Caco-2 (cell line): ENCODE measurements at regions of chr15 and their contacts with region 1.

Region 1: DNA sequence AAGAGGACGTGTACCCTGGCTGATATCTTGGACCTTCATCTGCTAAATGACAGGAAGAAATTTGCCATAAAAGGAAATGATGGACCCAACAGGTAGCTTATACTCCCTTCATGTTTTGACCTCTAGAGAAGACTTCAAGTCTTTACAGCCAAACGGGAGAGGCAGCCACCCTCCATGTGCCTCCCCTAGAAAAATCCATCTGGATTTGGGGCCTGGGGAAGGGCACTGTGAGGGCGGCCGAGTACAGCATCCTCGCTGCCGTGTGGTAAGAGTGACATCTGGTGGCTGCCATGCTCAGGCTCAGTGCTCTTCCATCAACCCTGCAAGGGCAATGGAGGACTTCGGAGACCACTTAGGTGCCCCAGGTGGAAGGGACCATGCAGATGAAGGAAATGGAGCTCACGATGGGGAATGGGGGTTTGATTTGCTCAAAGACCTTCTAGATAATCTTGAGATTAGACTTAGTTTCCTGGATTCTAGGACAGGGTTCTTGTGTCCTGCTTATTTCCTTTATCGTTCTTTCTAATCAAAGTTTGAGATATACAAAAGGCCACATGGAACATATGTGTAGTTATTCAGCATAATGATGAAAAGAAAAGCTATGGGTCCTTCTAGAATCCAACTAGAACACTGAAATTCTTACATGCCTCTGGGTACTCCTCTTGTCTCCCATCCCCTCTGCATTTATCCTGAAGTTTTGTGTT is 44.4 kb downstream of the AQP9 start:
- DNase-seq: peak; percentile 51 to 54
- H3K4me3 ChIP-seq: no peak overlapping the region
- H3K4me3 Mint-ChIP-seq: no peak overlapping the region
- H3K27ac Mint-ChIP-seq: no peak overlapping the region
- H3K4me1 ChIP-seq: no peaks in the 10 kb centered on the region
- H3K4me1 Mint-ChIP-seq: no peaks in the 10 kb centered on the region
- H3K27me3 ChIP-seq: no peaks in the 10 kb centered on the region
- H3K27me3 Mint-ChIP-seq: peaks cover 22% of the 10 kb centered on the region
- CTCF ChIP-seq: peak; percentile 88 to 90

Region 2: DNA sequence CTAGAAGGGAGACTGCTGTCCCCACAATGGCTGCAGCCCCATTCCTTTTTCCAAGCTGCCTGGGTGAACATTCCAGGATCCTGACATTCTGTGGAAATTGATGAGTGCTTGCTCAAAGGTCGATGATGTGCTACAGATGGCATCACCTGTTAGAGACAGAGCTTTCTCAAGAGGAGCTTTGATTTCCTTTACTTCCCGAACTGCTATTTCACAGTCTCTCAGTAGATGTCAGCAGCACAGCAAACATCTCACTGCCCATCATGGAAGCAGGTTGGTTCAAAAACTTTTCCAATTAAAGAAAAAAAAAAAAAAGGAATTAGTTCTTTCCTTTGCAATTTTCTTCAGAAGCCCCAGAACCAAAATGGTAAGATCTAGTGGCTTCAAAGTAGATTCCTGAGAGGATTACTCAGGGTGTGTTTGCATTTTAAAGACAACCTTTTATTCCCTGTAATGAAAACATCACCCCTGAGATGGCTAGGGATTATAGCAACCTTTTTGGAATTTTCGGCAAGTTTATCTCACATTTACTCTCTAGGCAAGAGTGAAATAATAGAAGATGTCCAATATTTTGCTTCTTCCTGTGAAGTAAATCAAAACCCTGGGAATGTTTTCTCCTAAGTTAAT is 431.3 kb before region 1 on chr15:
- CTCF ChIA-PET with region 1: no interaction called
- POLR2A ChIA-PET with region 1: no interaction called
- intact Hi-C with region 1: loop called (anchors 10 kb)
- DNase-seq: peak in 1 of 2 experiments; percentile 29
- H3K4me3 ChIP-seq: no peak overlapping the region
- H3K4me3 Mint-ChIP-seq: no peak overlapping the region
- H3K27ac Mint-ChIP-seq: no peak overlapping the region
- H3K4me1 ChIP-seq: no peaks in the 10 kb centered on the region
- H3K4me1 Mint-ChIP-seq: no peaks in the 10 kb centered on the region
- H3K27me3 ChIP-seq: no peaks in the 10 kb centered on the region
- H3K27me3 Mint-ChIP-seq: no peaks in the 10 kb centered on the region
- CTCF ChIP-seq: peak; percentile 51 to 62

Region 3: DNA sequence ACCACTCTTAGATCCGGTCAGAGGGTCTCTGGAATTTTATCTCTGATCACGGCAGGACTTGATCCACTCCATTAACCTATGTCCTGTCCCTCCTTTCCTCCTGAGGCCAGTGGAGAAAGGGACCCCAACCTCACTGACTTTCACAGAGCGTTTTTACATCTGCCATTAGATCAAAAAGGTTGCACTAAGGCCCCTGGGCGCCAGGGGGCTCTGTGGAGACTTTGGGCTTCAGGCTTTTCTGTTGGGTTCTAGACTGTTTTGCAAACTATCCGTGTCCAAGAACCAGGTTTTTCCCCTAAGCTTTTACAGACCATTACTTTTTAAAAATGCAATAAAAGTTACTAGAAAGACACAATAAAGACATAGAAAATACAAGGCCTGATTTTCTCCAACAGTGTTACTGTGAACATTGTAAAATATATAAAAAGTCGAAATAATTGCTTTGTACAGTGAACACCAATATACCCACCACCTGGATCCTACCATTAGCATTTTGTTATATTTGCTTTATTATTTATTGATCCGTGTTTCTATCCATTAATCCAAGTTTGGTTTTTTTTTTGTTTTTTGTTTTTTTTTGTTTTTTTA is 316.4 kb before region 1 on chr15:
- CTCF ChIA-PET with region 1: no interaction called
- POLR2A ChIA-PET with region 1: no interaction called
- intact Hi-C with region 1: loop called (anchors 1 kb)
- DNase-seq: peak; percentile 47 to 70
- H3K4me3 ChIP-seq: no peak overlapping the region
- H3K4me3 Mint-ChIP-seq: no peak overlapping the region
- H3K27ac Mint-ChIP-seq: no peak overlapping the region
- H3K4me1 ChIP-seq: no peaks in the 10 kb centered on the region
- H3K4me1 Mint-ChIP-seq: no peaks in the 10 kb centered on the region
- H3K27me3 ChIP-seq: no peaks in the 10 kb centered on the region
- H3K27me3 Mint-ChIP-seq: peaks cover 15% of the 10 kb centered on the region
- CTCF ChIP-seq: peak; percentile 62 to 86

Region 4: GRCh38 chr15:57969354-57969753 is 213.3 kb before region 1 on chr15:
- CTCF ChIA-PET with region 1: no interaction called
- POLR2A ChIA-PET with region 1: no interaction called
- intact Hi-C with region 1: loop called (anchors 5 kb)
- DNase-seq: peak in 1 of 2 experiments; percentile 30
- H3K4me3 ChIP-seq: no peak overlapping the region
- H3K4me3 Mint-ChIP-seq: no peak overlapping the region
- H3K27ac Mint-ChIP-seq: no peak overlapping the region
- H3K4me1 ChIP-seq: no peaks in the 10 kb centered on the region
- H3K4me1 Mint-ChIP-seq: no peaks in the 10 kb centered on the region
- H3K27me3 ChIP-seq: peaks cover 2% of the 10 kb centered on the region; the same call in 1 of the 2 replicates
- H3K27me3 Mint-ChIP-seq: peaks cover 11% of the 10 kb centered on the region
- CTCF ChIP-seq: peak; percentile 19 to 38

Region 5: DNA sequence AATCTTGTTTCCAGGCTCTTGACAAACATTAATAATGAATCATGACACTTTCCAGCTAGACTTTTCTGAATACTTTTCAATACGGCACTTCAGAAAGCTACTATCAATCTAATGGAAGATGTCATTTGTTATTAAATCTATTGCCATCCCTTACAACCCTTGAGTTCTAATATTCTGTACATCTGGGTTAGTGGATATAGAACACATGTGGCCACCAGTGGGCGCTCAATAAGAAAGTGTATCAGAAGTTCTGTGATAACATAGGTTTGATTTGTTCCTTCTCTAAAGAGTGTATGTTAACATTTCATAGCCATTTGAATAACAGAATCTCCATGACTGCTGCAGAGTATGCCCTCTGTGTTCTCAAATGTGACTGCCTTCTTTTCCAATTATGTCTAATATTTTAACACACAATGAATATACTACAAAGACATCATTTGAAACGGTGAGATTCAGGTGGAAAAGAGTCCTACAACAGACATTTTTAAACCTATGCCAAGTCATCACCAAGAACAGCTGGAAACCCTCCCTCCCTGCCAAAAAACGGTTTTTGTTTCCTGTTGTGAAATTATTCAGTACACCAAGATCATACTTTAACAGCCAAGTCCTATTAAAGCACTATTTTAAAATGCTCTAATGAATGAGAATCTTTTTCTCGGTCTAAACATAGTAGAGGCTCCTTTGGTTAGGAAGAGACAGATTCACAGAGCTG is 139.3 kb before region 1 on chr15:
- CTCF ChIA-PET with region 1: no interaction called
- POLR2A ChIA-PET with region 1: no interaction called
- intact Hi-C with region 1: loop called (anchors 1 kb)
- DNase-seq: peak in 1 of 2 experiments; percentile 41
- H3K4me3 ChIP-seq: no peak overlapping the region
- H3K4me3 Mint-ChIP-seq: no peak overlapping the region
- H3K27ac Mint-ChIP-seq: no peak overlapping the region
- H3K4me1 ChIP-seq: no peaks in the 10 kb centered on the region; the same call in 1 of the 2 replicates
- H3K4me1 Mint-ChIP-seq: no peaks in the 10 kb centered on the region
- H3K27me3 ChIP-seq: no peaks in the 10 kb centered on the region
- H3K27me3 Mint-ChIP-seq: peaks cover 16% of the 10 kb centered on the region
- CTCF ChIP-seq: peak; percentile 45 to 65

Region 6: DNA sequence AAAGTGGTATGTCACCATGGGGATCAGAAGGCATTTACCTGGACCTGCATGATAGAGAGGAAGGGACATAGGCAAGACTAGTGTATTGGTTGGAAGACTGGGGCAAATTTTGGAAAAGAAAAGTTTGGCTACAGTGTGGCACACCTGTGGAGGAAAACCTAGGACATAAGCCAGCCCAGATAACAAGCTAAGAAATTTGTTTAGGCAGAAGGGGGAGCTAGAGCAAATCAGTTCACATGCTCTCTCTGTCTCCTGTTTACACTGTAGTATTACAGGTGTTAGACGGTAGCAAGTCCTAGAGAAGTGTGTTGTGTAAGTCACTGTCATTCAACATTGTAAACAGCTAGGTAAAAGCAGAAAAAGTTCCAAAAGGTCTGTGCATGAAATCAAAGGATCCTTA is 105.2 kb before region 1 on chr15:
- CTCF ChIA-PET with region 1: interaction called, 6 read pairs
- POLR2A ChIA-PET with region 1: no interaction called
- intact Hi-C with region 1: loop called (anchors 1 kb)
- DNase-seq: peak in 1 of 2 experiments; percentile 22
- H3K4me3 ChIP-seq: no peak overlapping the region
- H3K4me3 Mint-ChIP-seq: no peak overlapping the region
- H3K27ac Mint-ChIP-seq: no peak overlapping the region
- H3K4me1 ChIP-seq: no peaks in the 10 kb centered on the region
- H3K4me1 Mint-ChIP-seq: peaks cover 5% of the 10 kb centered on the region
- H3K27me3 ChIP-seq: no peaks in the 10 kb centered on the region
- H3K27me3 Mint-ChIP-seq: peaks cover 16% of the 10 kb centered on the region
- CTCF ChIP-seq: peak in 1 of 2 experiments; percentile 45

Region 7: GRCh38 chr15:58115692-58116091 is 66.9 kb before region 1 on chr15:
- CTCF ChIA-PET with region 1: no interaction called
- POLR2A ChIA-PET with region 1: no interaction called
- intact Hi-C with region 1: loop called (anchors 1 kb)
- DNase-seq: peak in 1 of 2 experiments; percentile 2
- H3K4me3 ChIP-seq: no peak overlapping the region
- H3K4me3 Mint-ChIP-seq: no peak overlapping the region
- H3K27ac Mint-ChIP-seq: no peak overlapping the region
- H3K4me1 ChIP-seq: no peaks in the 10 kb centered on the region
- H3K4me1 Mint-ChIP-seq: no peaks in the 10 kb centered on the region
- H3K27me3 ChIP-seq: no peaks in the 10 kb centered on the region
- H3K27me3 Mint-ChIP-seq: peaks cover 18% of the 10 kb centered on the region
- CTCF ChIP-seq: peak in 1 of 2 experiments; percentile 39